GM13976 (cell line): ENCODE measurements at regions of chr4 and their contacts with region 1.

Region 1: DNA sequence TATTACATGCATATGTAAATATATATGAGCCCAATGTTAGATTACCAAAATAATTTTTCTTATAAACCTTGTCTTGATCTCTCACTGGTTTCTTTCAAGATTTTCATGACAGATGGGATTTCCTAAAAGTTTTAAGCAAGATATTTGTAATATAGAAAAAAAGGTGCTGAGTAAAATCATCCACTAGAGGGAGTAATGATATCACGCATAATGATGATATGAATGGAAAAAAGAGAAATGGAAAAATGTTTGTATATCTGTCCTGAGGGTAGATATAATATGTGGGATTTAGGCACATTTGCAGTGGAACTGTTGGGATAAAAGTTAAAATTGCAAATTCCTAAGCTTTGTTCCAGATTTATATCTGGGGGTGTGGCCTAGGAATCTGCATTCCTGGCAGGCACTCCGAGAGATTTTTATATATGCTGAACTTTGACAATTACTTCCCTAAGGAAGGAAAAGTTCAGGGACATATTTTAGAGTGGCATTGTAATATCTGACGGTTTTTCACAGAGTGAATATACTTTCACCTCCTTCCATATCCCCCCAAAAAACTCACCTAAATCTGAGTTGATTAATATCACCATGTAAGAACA is 60.5 kb downstream of the TMA16 start:
- DNase-seq: no peak
- CTCF ChIP-seq: peak; percentile 12

Region 2: GRCh38 chr4:163505374-163505773 is 49.6 kb before region 1 on chr4:
- in situ Hi-C with region 1: no loop called
- DNase-seq: no peak
- CTCF ChIP-seq: no peak

Region 3: GRCh38 chr4:163663454-163664225 is 108.7 kb after region 1 on chr4:
- in situ Hi-C with region 1: loop called (anchors 10 kb)
- DNase-seq: no peak
- CTCF ChIP-seq: no peak

Region 4: DNA sequence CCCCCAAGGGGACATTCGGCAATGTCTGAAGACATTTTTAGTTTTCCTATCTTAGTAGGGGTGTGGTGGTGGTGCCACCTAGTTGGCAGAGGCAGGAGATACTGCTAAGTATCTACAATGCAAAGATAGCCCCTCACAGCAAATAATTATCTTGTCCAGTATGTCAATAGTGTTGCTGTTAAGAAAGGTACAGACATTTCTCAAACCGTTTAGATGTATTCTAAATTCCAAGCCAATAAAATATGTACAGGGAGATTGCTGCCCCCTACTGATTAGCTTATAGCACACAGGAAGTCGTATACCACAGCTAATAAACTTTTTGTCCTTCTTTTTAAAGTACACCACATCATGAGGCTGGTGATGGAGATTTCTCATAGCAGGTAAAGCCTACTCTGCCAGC is 200.0 kb after region 1 on chr4:
- in situ Hi-C with region 1: loop called (anchors 10 kb)
- DNase-seq: peak; percentile 17
- CTCF ChIP-seq: peak; percentile 25

Region 5: GRCh38 chr4:164012396-164013027 is 457.5 kb after region 1 on chr4:
- in situ Hi-C with region 1: loop called (anchors 10 kb)
- DNase-seq: peak; percentile 3
- CTCF ChIP-seq: peak; percentile 26